MCF 10A (cell line): ENCODE measurements at regions of chr11 and their contacts with region 1.

Region 1: DNA sequence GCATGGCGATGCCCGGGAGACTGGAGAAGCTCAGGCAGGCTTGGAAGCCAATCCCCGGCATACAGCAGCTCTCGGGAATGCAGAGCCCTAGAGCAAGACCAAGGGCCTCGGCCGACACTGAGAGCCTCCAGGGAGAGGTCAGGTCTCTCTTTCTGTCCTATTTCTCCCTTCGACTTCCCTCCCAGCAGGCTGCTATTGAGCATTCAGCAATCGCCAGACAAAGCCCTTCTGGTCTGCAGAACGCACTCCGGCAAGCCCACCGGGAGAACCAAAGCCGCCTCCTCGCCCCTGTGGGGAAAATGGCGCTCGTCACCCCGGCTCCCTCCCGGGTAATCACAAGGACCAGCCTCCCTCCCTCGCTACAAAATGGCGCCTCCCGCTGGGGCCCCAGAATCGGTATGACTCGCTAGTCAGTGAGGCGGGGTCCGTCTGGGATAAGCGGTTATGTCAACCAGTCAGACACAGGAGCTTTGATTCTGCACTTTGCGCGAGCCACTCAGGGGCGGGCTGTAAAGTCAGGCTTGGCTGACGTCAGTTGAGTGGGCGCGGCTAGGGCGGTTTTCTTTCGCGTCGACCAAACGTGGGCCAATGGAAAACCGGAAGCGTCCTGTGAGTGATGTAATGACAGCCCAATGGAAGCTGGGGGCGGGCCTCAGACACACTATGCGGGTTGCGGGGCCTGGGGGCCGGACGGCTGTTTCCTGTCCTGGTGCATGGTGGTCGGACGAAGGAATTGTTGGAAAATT is at the start of gene ZNF143:
- DNase-seq: peak; percentile 100
- H3K4me3 Mint-ChIP-seq: peak within 1 kb of the TSS; percentile 88
- H3K27ac Mint-ChIP-seq: peak within 1 kb of the TSS; percentile 98
- H3K4me1 Mint-ChIP-seq: peaks cover 10% of the 10 kb centered on the region
- H3K27me3 Mint-ChIP-seq: no peaks in the 10 kb centered on the region
- CTCF ChIP-seq: no peak
- total RNA-seq, gene ZNF143: 19.0 and 25.2 TPM in 2 replicates

Region 2: DNA sequence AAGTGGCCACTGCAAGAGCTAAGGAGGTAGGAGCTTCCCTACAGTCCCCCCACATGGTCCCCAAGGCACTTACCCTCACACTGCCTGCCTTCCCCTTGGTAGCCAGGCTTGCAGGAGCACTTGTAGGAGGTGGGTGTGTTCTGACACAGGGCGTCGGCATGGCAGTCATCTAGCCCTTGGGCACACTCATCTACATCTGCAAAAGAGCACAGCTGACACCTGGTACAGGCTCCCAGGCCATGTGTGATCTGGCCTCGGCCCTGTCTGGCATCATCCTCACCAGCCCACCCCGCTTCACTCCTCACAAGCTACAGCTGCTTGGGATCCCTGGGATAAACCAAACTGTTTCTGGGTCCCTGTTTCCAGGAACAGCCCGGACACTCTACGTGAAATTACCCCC is 370.9 kb before region 1 on chr11:
- CTCF ChIA-PET with region 1: no interaction called
- POLR2A ChIA-PET with region 1: no interaction called
- intact Hi-C with region 1: no loop called
- DNase-seq: no peak
- H3K4me3 Mint-ChIP-seq: no peak overlapping the region
- H3K27ac Mint-ChIP-seq: no peak overlapping the region
- H3K4me1 Mint-ChIP-seq: no peaks in the 10 kb centered on the region
- H3K27me3 Mint-ChIP-seq: peaks cover 15% of the 10 kb centered on the region
- CTCF ChIP-seq: no peak

Region 3: DNA sequence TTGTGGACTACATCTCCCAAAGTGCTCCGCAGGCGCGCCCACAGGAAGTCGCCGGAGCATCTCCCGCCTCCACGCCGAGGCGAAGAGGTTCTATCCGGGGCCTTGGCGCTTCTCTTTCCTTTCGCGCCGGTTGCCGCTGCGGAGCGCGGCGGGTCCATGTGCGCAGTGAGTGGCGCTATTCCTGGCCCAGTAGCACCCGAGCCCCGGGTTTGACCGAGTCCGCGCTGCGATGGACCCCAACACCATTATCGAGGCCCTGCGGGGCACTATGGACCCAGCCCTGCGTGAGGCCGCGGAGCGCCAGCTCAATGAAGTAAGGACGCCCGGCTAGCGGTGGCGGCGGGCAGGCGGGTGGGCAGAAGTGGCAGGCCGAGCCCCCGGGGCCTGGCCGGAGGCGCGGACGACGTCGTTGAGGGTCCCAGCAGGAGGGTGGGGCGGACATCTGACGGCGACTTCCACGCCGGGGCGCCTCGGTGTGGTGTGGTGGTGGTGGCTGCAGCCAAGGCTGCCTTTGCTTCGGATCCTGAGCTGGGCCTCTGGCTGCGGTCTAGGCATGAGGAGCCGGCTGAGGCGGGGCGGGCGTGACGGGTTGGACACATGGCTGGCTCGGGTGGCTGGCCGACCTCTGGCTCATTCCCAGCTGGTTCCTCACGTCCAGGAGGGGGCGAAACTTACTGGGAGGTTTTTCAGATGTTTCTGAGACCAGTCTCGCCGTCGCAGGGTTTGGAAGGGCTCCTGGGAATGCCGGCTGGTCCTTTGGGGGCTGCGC is 75.8 kb before region 1 on chr11 and contains the start of gene IPO7:
- CTCF ChIA-PET with region 1: no interaction called
- POLR2A ChIA-PET with region 1: interaction called, 57 read pairs
- intact Hi-C with region 1: no loop called
- DNase-seq: peak; percentile 92
- H3K4me3 Mint-ChIP-seq: peak within 1 kb of the TSS; percentile 90
- H3K27ac Mint-ChIP-seq: peak within 1 kb of the TSS; percentile 94
- H3K4me1 Mint-ChIP-seq: peaks cover 12% of the 10 kb centered on the region
- H3K27me3 Mint-ChIP-seq: no peaks in the 10 kb centered on the region
- CTCF ChIP-seq: peak; percentile 32
- total RNA-seq, gene IPO7: 116 and 145 TPM in 2 replicates

Region 4: GRCh38 chr11:9473408-9473807 is 12.9 kb after region 1 on chr11:
- CTCF ChIA-PET with region 1: interaction called, 6 read pairs
- POLR2A ChIA-PET with region 1: interaction called, 42 read pairs
- intact Hi-C with region 1: no loop called
- DNase-seq: no peak
- H3K4me3 Mint-ChIP-seq: no peak overlapping the region
- H3K27ac Mint-ChIP-seq: no peak overlapping the region
- H3K4me1 Mint-ChIP-seq: no peaks in the 10 kb centered on the region
- H3K27me3 Mint-ChIP-seq: no peaks in the 10 kb centered on the region
- CTCF ChIP-seq: no peak

Region 5: GRCh38 chr11:9506489-9507276 is 46.2 kb after region 1 on chr11:
- CTCF ChIA-PET with region 1: interaction called, 17 read pairs
- POLR2A ChIA-PET with region 1: interaction called, 32 read pairs
- intact Hi-C with region 1: no loop called
- DNase-seq: peak; percentile 82
- H3K4me3 Mint-ChIP-seq: no peak overlapping the region
- H3K27ac Mint-ChIP-seq: peak overlapping the region; percentile 16
- H3K4me1 Mint-ChIP-seq: peaks cover 17% of the 10 kb centered on the region
- H3K27me3 Mint-ChIP-seq: no peaks in the 10 kb centered on the region
- CTCF ChIP-seq: peak; percentile 74

Region 6: GRCh38 chr11:9613118-9613829 is 152.8 kb after region 1 on chr11:
- CTCF ChIA-PET with region 1: no interaction called
- POLR2A ChIA-PET with region 1: interaction called, 42 read pairs
- intact Hi-C with region 1: loop called (anchors 1 kb)
- DNase-seq: peak; percentile 94
- H3K4me3 Mint-ChIP-seq: peak overlapping the region; percentile 77
- H3K27ac Mint-ChIP-seq: peak overlapping the region; percentile 97
- H3K4me1 Mint-ChIP-seq: peaks cover 35% of the 10 kb centered on the region
- H3K27me3 Mint-ChIP-seq: no peaks in the 10 kb centered on the region
- CTCF ChIP-seq: peak; percentile 92